ENCODE measurements at regions of chr4 and their contacts with region 1.

Region 1: GRCh38 chr4:121696581-121697461 is at the start of gene ANXA5:
- DNase-seq: peak; percentile 95
- ATAC-seq: peak; percentile 98
- total RNA-seq, gene ANXA5: 136 TPM

Region 2: GRCh38 chr4:121736735-121737351 is 40.0 kb after region 1 on chr4:
- intact Hi-C with region 1: loop called (anchors 5 kb)
- DNase-seq: no peak
- ATAC-seq: no peak

Region 3: DNA sequence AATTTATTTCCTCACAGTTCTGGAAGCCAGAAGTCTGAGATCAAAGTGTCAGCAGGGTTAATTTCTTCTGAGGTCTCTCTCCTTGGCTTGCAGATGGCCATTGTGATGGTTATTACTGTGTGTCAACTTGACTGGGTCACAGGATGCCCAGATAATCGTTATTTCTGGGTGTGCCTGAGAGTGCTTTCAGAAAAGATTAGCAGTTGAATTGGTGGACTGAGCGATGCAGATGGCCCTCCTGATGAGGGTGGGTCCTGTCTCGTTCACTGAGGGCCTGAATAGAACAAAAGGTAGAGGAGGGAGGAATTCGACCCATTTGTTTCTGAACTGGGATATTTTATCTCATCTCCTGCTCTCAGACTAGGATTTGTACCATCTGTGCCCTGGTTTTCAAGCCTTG is 52.4 kb after region 1 on chr4:
- intact Hi-C with region 1: no loop called
- DNase-seq: no peak
- ATAC-seq: no peak

Region 4: DNA sequence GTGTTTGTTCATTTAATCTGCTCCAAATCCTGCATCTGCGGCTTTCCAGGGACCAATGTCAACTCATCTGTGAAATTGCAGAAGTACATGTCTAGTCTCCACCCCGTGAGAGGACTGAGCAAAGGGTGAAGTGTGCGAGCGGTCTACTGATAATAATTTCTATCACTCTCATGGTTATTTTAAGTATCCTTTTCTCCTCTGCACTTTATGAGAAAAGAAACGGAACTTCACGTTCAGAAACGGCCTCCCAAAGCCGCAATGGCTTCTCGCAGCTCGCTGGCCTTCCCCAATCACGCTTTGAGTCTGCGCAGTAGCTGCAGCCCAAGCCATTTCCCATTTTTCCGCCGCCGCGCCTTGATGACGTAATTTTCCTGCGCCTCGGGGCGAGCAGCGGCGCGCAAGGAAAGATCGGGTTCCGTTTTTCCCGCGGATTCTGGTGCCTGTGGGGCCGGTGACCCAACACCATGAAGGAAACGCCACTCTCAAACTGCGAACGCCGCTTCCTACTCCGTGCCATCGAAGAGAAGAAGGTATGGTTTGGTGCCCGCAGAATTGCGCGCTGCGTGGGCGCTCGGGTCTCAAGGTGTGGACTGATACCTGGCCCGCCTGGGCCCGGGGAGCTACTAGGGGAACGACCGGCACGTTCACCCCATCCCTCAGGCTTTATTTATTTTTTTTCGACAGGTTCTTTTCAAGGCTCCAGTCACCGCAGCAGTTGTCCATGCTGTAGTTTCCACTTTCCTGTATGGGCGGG is 104.3 kb after region 1 on chr4 and contains the start of gene EXOSC9:
- intact Hi-C with region 1: loop called (anchors 5 kb)
- DNase-seq: peak; percentile 96
- ATAC-seq: peak; percentile 95
- total RNA-seq, gene EXOSC9: 10.2 TPM

Region 5: GRCh38 chr4:121823505-121824170 is 126.8 kb after region 1 on chr4 and contains the start of gene CCNA2:
- intact Hi-C with region 1: loop called (anchors 5 kb)
- DNase-seq: peak; percentile 98
- ATAC-seq: peak; percentile 100
- total RNA-seq, gene CCNA2: 1.2 TPM

Measured in Right ventricle myocardium inferior (tissue), 1 donor.